GM12878 (cell line): ENCODE measurements at regions of chr22 and their contacts with region 1.

Region 1: GRCh38 chr22:22110548-22111266 is 128.1 kb upstream of the TOP3B start:
- DNase-seq: peak; percentile 93
- ATAC-seq: peak; percentile 97
- H3K4me3 ChIP-seq: no peak overlapping the region; the same call in 1 of the 2 replicates
- H3K27ac ChIP-seq: peak overlapping the region; percentile 88
- H3K4me1 ChIP-seq: peaks cover 18% of the 10 kb centered on the region
- H3K27me3 ChIP-seq: no peaks in the 10 kb centered on the region
- CTCF ChIP-seq: peak; percentile 77 to 89 (median 78)
- EP300 ChIP-seq: peak in 1 of 2 experiments; percentile 61; a peak in 1 of 4 replicates
- POLR2A ChIP-seq: no peak
- RAD21 ChIP-seq: peak; percentile 52

Region 2: GRCh38 chr22:22030493-22031182 is 80.1 kb before region 1 on chr22:
- CTCF ChIA-PET with region 1: interaction called, 51 read pairs
- POLR2A ChIA-PET with region 1: interaction called, 10 read pairs
- RAD21 ChIA-PET with region 1: interaction called, 41 read pairs
- SMC1A ChIA-PET with region 1: interaction called, 39 read pairs
- in situ Hi-C with region 1: no loop called
- intact Hi-C with region 1: loop called (anchors 2 kb)
- DNase-seq: peak; percentile 84
- ATAC-seq: peak; percentile 82
- H3K4me3 ChIP-seq: peak overlapping the region; percentile 66
- H3K27ac ChIP-seq: peak overlapping the region; percentile 80
- H3K4me1 ChIP-seq: peaks cover 38% of the 10 kb centered on the region
- H3K27me3 ChIP-seq: no peaks in the 10 kb centered on the region
- CTCF ChIP-seq: peak; percentile 85 to 93 (median 88)
- EP300 ChIP-seq: no peak; a peak in 1 of 4 replicates
- POLR2A ChIP-seq: peak; percentile 92
- RAD21 ChIP-seq: peak; percentile 84

Region 3: DNA sequence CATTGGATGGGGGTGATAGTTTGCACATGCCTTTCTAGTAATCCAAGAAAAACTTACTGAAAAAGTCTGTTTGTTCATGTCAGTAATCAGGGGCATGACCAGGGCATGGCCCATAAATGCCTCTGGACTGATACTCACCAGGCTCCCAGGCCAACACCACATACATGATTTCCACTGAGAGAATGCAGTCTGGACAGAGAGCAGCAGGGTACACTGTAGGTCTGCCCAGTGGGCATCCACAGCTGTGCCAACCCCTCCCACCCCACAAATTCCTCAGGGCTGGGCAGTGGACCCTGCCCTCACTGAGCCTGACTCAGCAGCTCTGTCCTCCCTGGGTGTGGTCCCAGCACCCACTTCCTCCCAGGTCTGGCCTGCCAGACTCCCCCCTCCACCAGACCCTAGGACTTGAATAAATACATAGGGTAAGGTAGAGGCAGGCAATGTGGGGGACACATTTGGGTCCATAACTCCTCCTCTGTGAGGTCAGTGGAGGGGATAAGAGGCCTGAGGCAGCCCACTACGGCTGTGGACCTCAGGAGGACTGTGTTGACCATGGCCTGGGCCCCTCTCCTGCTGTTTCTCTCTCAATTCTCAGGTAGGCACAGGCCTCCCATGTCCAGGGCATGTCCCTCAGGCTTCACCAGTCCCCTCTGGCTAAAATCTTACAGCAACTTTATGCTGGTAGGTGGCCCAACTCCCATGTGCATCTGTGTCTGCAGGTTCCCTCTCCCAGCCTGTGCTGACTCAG is 35.9 kb before region 1 on chr22:
- CTCF ChIA-PET with region 1: interaction called, 10 read pairs
- POLR2A ChIA-PET with region 1: no interaction called
- RAD21 ChIA-PET with region 1: interaction called, 6 read pairs
- SMC1A ChIA-PET with region 1: interaction called, 9 read pairs
- in situ Hi-C with region 1: no loop called
- intact Hi-C with region 1: no loop called
- DNase-seq: no peak
- ATAC-seq: no peak
- H3K4me3 ChIP-seq: no peak overlapping the region
- H3K27ac ChIP-seq: no peak overlapping the region
- H3K4me1 ChIP-seq: peaks cover 11% of the 10 kb centered on the region
- H3K27me3 ChIP-seq: no peaks in the 10 kb centered on the region
- CTCF ChIP-seq: no peak
- EP300 ChIP-seq: no peak
- POLR2A ChIP-seq: no peak
- RAD21 ChIP-seq: no peak

Region 4: DNA sequence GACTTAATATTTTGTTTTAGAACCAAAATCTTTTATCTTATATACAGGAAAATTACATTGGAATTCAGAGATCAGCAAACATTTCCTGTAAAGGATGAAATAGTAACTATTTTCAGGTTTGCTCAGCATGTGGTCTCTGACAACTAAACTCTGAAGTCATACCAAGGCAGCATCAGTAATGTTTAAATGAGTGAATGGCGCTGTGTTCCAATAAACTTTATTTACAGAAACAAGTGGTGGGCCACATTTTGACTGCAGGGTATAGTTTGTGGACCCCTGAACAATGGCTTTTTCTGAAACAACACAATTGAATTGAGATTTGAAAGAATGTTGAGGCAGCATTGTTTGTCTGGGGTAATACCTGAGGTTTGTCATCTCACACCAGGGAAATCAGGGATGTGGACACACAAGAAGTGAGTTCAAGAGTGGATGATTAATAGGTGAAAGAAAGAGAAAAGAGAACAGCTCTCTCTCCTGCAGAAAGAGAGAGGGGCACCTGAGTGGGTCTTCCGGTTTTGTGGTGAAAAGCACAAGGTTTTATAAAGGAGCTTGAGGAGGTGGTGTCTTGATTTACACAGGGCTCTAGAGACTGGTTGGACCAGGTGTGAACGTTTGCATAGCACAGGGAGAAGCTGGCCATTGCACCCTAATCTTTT is 20.4 kb after region 1 on chr22:
- CTCF ChIA-PET with region 1: interaction called, 27 read pairs
- POLR2A ChIA-PET with region 1: interaction called, 3 read pairs
- RAD21 ChIA-PET with region 1: interaction called, 3 read pairs
- SMC1A ChIA-PET with region 1: interaction called, 55 read pairs
- in situ Hi-C with region 1: no loop called
- intact Hi-C with region 1: no loop called
- DNase-seq: no peak
- ATAC-seq: peak; percentile 50
- H3K4me3 ChIP-seq: no peak overlapping the region
- H3K27ac ChIP-seq: no peak overlapping the region
- H3K4me1 ChIP-seq: no peaks in the 10 kb centered on the region
- H3K27me3 ChIP-seq: no peaks in the 10 kb centered on the region
- CTCF ChIP-seq: no peak
- EP300 ChIP-seq: no peak
- POLR2A ChIP-seq: no peak
- RAD21 ChIP-seq: no peak

Region 5: GRCh38 chr22:22150457-22150856 is 39.8 kb after region 1 on chr22:
- CTCF ChIA-PET with region 1: interaction called, 22 read pairs
- POLR2A ChIA-PET with region 1: no interaction called
- RAD21 ChIA-PET with region 1: interaction called, 6 read pairs
- SMC1A ChIA-PET with region 1: interaction called, 26 read pairs
- in situ Hi-C with region 1: no loop called
- intact Hi-C with region 1: no loop called
- DNase-seq: no peak
- ATAC-seq: no peak
- H3K4me3 ChIP-seq: no peak overlapping the region
- H3K27ac ChIP-seq: no peak overlapping the region
- H3K4me1 ChIP-seq: no peaks in the 10 kb centered on the region; the same call in 1 of the 2 replicates
- H3K27me3 ChIP-seq: no peaks in the 10 kb centered on the region
- CTCF ChIP-seq: no peak
- EP300 ChIP-seq: no peak
- POLR2A ChIP-seq: no peak
- RAD21 ChIP-seq: no peak

Region 6: DNA sequence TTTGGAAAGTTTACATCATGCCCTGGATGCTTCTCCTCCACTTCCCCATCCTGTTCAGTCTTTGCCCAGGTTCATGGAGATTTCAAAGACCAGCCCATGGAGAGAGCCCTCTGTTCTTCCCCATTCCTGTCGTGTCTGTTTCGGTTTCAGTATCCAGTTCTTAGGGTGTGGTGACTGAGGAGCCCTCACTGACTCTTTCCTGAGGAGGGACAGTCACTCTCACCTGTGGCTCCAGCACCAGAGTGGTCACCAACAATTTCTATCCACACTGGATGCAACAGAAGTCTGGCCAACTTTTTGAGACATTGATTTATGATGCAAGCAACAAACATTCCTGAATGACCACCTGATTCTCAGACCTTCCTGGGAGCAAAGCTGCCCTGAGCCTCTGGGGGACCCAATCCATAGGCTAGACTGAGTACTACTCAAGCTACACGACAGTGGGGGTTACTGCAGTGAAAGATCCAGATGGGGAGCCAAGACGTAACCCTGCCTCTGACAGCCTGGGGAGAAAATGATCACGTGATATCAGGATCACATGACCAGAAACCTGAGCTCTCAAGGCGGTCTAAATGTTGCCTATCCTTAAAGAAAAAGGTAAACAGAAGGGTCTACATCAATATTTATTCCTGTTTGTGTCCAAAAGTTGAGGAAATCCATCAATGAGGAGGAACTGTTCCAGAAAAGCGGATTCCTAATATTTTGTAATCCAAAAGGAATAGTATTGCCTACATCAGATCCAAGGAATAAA is 57.7 kb after region 1 on chr22:
- CTCF ChIA-PET with region 1: interaction called, 29 read pairs
- POLR2A ChIA-PET with region 1: no interaction called
- RAD21 ChIA-PET with region 1: interaction called, 18 read pairs
- SMC1A ChIA-PET with region 1: interaction called, 19 read pairs
- in situ Hi-C with region 1: no loop called
- intact Hi-C with region 1: no loop called
- DNase-seq: peak; percentile 57
- ATAC-seq: peak; percentile 74
- H3K4me3 ChIP-seq: peak overlapping the region; percentile 52; the same call in 1 of the 2 replicates
- H3K27ac ChIP-seq: peak overlapping the region; percentile 83
- H3K4me1 ChIP-seq: peaks cover 15% of the 10 kb centered on the region
- H3K27me3 ChIP-seq: no peaks in the 10 kb centered on the region
- CTCF ChIP-seq: no peak
- EP300 ChIP-seq: no peak
- POLR2A ChIP-seq: no peak; the same call in 1 of the 2 replicates
- RAD21 ChIP-seq: no peak

Region 7: DNA sequence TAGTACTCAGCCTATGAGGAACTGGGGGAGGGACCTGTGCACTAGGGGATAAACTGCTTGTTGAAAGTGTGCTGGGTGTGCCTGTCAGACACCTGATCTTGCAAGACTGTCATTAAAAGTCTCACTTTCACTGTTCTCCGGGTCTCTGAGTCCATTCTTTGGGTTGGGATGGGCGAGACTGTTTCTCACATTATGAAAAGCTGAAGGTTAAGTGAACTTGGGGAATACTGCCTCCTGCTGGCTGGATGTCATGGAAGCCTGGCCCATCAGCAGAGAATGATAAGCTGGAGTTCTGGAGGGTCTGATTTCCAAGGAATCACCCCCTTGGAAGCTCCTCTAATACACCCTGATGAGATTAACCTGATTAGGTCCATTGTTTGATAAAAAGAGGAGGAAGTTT is 124.9 kb after region 1 on chr22:
- CTCF ChIA-PET with region 1: interaction called, 10 read pairs
- POLR2A ChIA-PET with region 1: no interaction called
- RAD21 ChIA-PET with region 1: interaction called, 3 read pairs
- SMC1A ChIA-PET with region 1: interaction called, 8 read pairs
- in situ Hi-C with region 1: no loop called
- intact Hi-C with region 1: no loop called
- DNase-seq: peak; percentile 17
- ATAC-seq: peak; percentile 48; the same call in 2 of the 3 replicates
- H3K4me3 ChIP-seq: no peak overlapping the region
- H3K27ac ChIP-seq: no peak overlapping the region
- H3K4me1 ChIP-seq: no peaks in the 10 kb centered on the region
- H3K27me3 ChIP-seq: no peaks in the 10 kb centered on the region
- CTCF ChIP-seq: peak; percentile 51 to 55 (median 52); a peak in 5 of 6 replicates
- EP300 ChIP-seq: no peak
- POLR2A ChIP-seq: no peak
- RAD21 ChIP-seq: peak; percentile 62